Tibial artery (tissue), 4 donors: ENCODE measurements at regions of chr4 and their contacts with region 1.

Region 1: DNA sequence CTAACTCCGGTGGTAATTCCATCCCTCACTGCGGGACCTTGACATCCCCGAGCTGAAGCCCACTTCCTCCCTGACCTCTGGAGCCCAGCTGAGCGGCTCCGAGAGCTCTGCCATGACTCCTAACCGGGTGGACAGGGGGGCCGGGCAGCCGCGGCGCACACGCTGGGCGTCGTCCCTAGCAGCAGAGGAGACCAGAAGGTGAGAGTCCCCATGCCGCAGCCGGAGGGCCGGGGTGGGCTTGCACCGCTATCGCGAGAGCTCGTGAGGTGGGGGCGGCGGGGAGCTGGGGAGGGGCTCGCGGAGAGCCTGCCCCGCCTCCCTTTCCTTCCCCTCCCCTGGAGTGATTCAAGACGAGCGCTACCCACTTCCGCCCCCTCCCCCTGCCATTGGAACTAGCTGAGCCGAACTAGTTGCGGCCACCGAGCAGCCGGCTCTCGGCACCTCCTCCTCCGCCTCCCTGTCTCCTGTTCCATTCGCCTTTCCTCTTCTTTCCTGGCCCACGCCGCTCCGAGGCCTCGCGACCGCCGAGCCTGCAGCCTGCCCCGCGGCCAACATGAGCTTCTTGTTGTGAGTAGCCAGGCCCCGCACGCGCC is at the start of gene MOB1B:
- DNase-seq: peak; percentile 88 to 91
- H3K4me3 ChIP-seq: peak within 1 kb of the TSS; percentile 68 to 76
- H3K27ac ChIP-seq: peak within 1 kb of the TSS; percentile 87 to 89
- H3K4me1 ChIP-seq: peaks cover 0 to 10% (median 2%) of the 10 kb centered on the region in 4 donors
- H3K27me3 ChIP-seq: no peaks in the 10 kb centered on the region
- CTCF ChIP-seq: peak; percentile 21 to 49

Region 2: DNA sequence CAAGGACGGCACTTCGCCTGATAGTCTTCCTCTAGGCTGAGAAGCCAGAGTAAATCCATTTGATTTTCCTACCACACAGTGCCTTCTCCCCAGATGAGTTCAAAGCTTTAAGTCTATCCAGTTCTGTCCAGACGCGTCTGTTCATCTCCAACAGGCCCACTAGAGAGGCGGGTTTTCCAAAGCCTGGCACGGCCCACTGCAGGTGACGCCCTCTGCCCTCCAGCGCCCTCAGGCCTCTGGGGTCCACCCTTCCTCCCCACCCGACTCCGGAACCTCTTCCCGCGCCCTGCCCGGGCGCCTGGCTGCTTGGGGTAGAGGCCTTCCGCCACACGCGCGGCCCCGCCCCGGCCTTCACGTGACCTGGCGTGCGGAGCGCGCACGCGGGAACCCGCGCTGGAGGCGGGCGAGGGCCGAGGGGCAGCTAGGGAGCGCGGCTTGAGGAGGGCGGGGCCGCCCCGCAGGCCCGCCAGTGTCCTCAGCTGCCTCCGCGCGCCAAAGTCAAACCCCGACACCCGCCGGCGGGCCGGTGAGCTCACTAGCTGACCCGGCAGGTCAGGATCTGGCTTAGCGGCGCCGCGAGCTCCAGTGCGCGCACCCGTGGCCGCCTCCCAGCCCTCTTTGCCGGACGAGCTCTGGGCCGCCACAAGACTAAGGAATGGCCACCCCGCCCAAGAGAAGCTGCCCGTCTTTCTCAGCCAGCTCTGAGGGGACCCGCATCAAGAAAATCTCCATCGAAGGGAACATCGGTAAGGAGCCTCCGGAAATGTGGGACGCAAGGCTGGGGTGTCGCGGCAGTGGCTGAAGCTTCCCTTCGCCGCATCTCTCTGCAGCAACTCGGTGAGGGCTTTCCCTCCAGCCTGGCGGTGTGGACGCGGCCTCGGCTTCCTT is 91.3 kb after region 1 on chr4 and contains the start of gene DCK:
- intact Hi-C with region 1: loop called (anchors 5 kb)
- DNase-seq: peak; percentile 86 to 95
- H3K4me3 ChIP-seq: peak within 1 kb of the TSS; percentile 76 to 79
- H3K27ac ChIP-seq: peak within 1 kb of the TSS; percentile 81 to 89
- H3K4me1 ChIP-seq: peaks cover 0 to 29% (median 13%) of the 10 kb centered on the region in 4 donors
- H3K27me3 ChIP-seq: no peaks in the 10 kb centered on the region
- CTCF ChIP-seq: no peak